ENCODE measurements at regions of chr1 and their contacts with region 1.

Region 1: DNA sequence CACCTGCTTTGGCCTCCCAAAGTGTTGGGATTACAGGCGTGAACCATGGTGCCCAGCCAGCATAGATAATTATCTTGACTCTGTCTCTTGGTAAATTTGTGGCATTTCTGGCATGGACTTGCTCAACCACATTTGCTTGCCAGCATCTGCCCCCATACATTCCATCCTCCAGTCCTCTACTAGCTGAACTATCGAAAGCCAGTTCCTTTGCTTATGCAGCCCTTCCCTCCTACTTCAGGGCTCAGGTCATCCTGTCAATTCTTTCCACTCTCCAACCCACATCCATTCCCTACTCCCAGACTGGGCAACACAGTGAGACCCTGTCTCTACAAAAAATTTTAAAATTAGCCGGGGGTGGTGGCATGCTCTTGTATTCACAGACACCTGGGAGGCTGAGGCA is 13.0 kb upstream of the UQCRHL start:
- DNase-seq: no peak
- ATAC-seq: no peak
- H3K4me3 Mint-ChIP-seq: no peak overlapping the region
- H3K27ac Mint-ChIP-seq: no peak overlapping the region
- H3K4me1 Mint-ChIP-seq: peaks cover 11% of the 10 kb centered on the region
- H3K27me3 Mint-ChIP-seq: no peaks in the 10 kb centered on the region

Region 2: DNA sequence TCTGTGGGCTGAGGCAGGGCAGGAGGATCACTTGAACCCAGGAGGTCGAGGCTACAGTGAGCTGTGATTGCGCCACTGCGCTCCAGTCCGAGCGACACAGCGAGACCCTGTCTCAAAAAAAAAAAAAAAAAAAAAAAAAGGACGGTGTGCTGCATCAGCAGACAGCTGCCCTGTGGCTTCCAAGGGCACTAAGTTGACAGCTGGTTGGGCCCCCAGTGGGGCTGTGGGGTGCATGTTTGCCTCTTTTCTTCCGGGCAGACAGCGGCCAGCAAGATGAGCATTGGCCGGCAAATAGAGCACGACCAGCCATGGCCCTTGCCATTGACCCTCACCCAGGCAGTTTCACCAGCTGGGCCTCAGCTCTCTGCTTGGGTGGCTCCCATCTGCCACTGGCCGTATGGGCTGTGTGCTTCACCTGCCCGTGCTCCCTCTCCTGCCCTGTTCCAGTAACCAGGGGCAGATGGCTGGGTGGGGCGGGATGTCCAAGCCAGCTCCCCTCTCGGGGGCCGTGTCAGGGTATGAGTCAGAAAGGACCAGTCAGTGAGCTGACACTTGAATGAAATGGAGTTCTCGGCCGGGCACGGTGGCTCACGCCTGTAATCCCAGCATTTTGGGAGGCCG is 96.7 kb before region 1 on chr1:
- CTCF ChIA-PET with region 1: no interaction called
- POLR2A ChIA-PET with region 1: no interaction called
- DNase-seq: no peak
- ATAC-seq: no peak
- H3K4me3 Mint-ChIP-seq: no peak overlapping the region
- H3K27ac Mint-ChIP-seq: no peak overlapping the region
- H3K4me1 Mint-ChIP-seq: no peaks in the 10 kb centered on the region
- H3K27me3 Mint-ChIP-seq: no peaks in the 10 kb centered on the region

Region 3: DNA sequence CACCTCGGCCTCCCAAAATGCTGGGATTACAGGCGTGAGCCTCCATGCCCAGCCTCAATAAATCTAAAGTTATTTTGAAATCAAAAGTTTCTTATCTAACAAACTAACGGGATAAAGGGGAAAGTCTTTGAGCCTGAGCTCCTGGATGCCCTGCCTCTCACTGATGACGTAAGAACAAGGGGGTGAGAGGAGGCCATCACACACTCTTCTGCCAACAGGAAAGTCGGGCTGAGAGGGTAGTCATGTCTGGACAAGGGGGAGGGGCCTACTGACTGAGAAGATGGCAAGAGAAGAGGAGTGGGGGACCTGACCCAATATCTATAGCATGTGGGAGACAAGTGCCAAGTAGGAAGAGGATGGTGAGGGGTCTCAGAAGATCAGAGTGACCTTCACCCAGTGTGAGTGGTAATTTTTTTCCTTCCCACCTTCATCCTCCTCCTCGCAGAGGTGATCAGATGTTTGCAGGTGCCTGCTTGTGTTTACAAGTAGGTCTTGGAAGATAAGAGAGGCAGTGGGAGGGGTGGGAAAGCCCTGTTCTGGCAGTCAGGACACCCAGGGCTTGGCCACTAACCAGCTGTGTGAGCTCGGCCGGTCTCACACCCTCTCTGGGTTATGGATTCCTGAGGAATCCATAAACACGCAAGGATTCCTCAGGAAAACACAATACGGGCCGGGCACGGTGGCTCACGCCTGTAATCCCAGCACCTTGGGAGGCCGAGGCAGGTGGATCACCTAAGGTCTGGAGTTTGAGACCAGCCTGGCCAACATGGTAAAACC is 22.7 kb before region 1 on chr1:
- CTCF ChIA-PET with region 1: interaction called, 16 read pairs
- POLR2A ChIA-PET with region 1: no interaction called
- DNase-seq: no peak
- ATAC-seq: no peak
- H3K4me3 Mint-ChIP-seq: no peak overlapping the region
- H3K27ac Mint-ChIP-seq: no peak overlapping the region
- H3K4me1 Mint-ChIP-seq: no peaks in the 10 kb centered on the region
- H3K27me3 Mint-ChIP-seq: peaks cover 8% of the 10 kb centered on the region

Region 4: GRCh38 chr1:15847100-15847892 is 26.8 kb after region 1 on chr1 and contains the start of gene SPEN:
- CTCF ChIA-PET with region 1: interaction called, 14 read pairs
- POLR2A ChIA-PET with region 1: interaction called, 3 read pairs
- DNase-seq: peak; percentile 98
- ATAC-seq: peak; percentile 86
- H3K4me3 Mint-ChIP-seq: peak within 1 kb of the TSS; percentile 95
- H3K27ac Mint-ChIP-seq: peak within 1 kb of the TSS; percentile 97
- H3K4me1 Mint-ChIP-seq: peaks cover 47% of the 10 kb centered on the region
- H3K27me3 Mint-ChIP-seq: no peaks in the 10 kb centered on the region
- total RNA-seq, gene SPEN: 65.0 to 66.3 TPM

Region 5: GRCh38 chr1:15911141-15911540 is 90.7 kb after region 1 on chr1:
- CTCF ChIA-PET with region 1: interaction called, 15 read pairs
- POLR2A ChIA-PET with region 1: no interaction called
- DNase-seq: no peak
- ATAC-seq: no peak
- H3K4me3 Mint-ChIP-seq: no peak overlapping the region
- H3K27ac Mint-ChIP-seq: no peak overlapping the region
- H3K4me1 Mint-ChIP-seq: peaks cover 11% of the 10 kb centered on the region
- H3K27me3 Mint-ChIP-seq: no peaks in the 10 kb centered on the region

Region 6: GRCh38 chr1:15975805-15976680 is 155.6 kb after region 1 on chr1 and contains the start of gene ZBTB17:
- CTCF ChIA-PET with region 1: interaction called, 13 read pairs
- POLR2A ChIA-PET with region 1: no interaction called
- DNase-seq: peak; percentile 96
- ATAC-seq: peak; percentile 94
- H3K4me3 Mint-ChIP-seq: peak within 1 kb of the TSS; percentile 88
- H3K27ac Mint-ChIP-seq: peak within 1 kb of the TSS; percentile 80
- H3K4me1 Mint-ChIP-seq: peaks cover 30% of the 10 kb centered on the region
- H3K27me3 Mint-ChIP-seq: no peaks in the 10 kb centered on the region
- total RNA-seq, gene ZBTB17: 32.3 to 33.3 TPM

Measured in activated CD8-positive, alpha-beta T cell treated with anti-CD3 and anti-CD28 coated beads, Interleukin-2, amount 10 ng/mL, durations not matched to agents 7 days and 5 days (primary cell).